Activated naive CD4-positive, alpha-beta T cell treated with anti-CD3 and anti-CD28 coated beads for 36 hours (primary cell): ENCODE measurements at regions of chr12 and their contacts with region 1.

Region 1: DNA sequence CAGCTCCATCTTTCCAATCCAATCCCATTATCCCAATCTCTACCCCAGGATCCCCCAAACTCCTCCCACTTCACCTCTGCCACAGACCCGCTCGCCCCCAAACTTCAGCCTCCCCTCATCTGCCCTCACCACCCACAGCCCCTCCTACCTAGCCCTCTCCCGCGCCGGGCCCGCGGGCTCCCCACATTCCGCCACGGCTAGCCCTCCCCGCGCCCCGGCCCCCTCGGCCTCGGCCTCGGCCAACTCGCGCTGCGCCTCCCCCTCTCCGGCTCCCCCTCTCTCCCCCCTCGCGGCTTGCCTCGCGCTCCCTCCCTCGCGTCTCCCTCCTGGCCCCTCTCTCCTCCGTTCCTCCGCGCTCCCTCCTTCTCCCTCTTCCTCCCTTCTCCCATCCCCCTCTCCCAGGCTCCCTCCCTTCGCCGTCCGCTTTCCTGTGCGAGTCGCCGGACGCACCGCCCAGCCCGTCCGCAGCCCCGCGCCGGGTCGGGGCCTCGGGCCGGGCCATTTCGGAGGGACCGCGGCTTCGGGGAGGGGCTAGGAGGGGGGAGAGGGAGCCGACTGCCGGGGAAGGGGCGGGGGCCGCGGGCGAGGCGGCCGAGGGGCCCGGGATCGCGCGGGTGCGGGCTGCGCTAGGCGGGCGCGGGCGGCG is at the start of gene ATN1:
- DNase-seq: peak; percentile 51
- H3K4me3 Mint-ChIP-seq: peak within 1 kb of the TSS; percentile 75
- H3K27ac Mint-ChIP-seq: peak within 1 kb of the TSS; percentile 81
- H3K4me1 Mint-ChIP-seq: peaks cover 59% of the 10 kb centered on the region
- H3K27me3 Mint-ChIP-seq: no peaks in the 10 kb centered on the region
- total RNA-seq, gene ATN1: 20.1 to 22.2 TPM

Region 2: GRCh38 chr12:6867413-6868210 is 59.9 kb before region 1 on chr12 and contains the start of gene TPI1:
- CTCF ChIA-PET with region 1: interaction called, 13 read pairs
- intact Hi-C with region 1: loop called (anchors 2 kb)
- DNase-seq: peak; percentile 79
- H3K4me3 Mint-ChIP-seq: peak within 1 kb of the TSS; percentile 98
- H3K27ac Mint-ChIP-seq: peak within 1 kb of the TSS; percentile 94
- H3K4me1 Mint-ChIP-seq: peaks cover 52% of the 10 kb centered on the region
- H3K27me3 Mint-ChIP-seq: no peaks in the 10 kb centered on the region
- total RNA-seq, gene TPI1: 1,222 to 1,282 TPM

Region 3: DNA sequence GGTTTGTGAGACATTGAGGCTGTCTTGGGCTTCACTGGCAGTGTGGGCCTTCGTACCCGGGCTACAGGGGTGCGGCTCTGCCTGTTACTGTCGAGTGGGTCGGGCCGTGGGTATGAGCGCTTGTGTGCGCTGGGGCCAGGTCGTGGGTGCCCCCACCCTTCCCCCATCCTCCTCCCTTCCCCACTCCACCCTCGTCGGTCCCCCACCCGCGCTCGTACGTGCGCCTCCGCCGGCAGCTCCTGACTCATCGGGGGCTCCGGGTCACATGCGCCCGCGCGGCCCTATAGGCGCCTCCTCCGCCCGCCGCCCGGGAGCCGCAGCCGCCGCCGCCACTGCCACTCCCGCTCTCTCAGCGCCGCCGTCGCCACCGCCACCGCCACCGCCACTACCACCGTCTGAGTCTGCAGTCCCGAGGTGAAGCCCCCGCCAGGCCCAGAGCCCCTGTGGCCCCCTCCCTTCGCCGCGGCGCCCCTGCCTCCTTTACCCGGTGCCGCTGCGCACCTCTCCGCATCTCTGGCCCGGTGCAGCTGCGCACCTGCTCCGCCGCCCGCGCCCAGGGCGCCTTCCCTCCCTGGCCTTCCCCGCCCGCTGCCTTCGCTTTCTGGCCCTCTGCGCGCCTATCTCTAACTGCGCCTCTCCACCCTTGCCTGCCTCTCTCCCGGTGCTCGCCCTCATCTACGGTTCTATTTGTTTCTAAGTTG is 13.1 kb before region 1 on chr12 and contains the start of gene ENO2:
- CTCF ChIA-PET with region 1: interaction called, 18 read pairs
- intact Hi-C with region 1: no loop called
- DNase-seq: peak; percentile 86
- H3K4me3 Mint-ChIP-seq: peak within 1 kb of the TSS; percentile 89
- H3K27ac Mint-ChIP-seq: peak within 1 kb of the TSS; percentile 71
- H3K4me1 Mint-ChIP-seq: peaks cover 35% of the 10 kb centered on the region
- H3K27me3 Mint-ChIP-seq: no peaks in the 10 kb centered on the region
- total RNA-seq, gene ENO2: 128 to 131 TPM

Region 4: DNA sequence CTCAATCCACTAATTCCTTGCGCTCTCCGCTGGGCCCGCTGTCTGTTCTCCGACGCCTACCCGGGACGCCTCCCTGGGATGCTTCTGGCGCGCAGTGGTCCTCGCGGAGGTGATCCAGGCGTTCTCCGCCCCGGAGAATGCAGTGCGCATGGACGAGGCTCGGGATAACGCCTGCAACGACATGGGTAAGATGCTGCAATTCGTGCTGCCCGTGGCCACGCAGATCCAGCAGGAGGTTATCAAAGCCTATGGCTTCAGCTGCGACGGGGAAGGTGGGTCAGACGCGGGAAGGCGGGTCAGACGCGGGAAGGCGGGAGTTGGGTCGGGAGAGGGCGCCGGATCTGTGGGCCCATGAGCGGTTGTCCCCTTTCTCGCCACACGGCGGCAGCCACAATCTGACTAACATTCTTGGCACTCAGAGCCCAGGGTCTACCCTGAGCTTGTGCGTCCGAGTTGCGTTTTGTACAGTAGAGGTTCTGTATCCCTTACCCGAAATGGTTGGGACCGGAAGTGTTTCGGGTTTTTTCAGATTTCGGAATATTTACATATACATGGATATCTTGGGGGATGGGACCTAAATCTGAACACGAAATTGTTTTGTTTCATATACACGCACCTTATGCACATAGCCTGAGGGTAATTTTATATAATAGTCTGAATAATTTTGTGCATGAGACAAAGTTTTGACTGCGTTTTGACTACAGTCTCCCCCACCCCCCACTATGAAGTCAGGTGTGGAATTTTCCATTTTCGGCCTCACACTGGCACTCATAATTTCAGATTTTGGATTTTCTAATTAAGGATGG is 17.1 kb after region 1 on chr12:
- CTCF ChIA-PET with region 1: interaction called, 43 read pairs
- intact Hi-C with region 1: loop called (anchors 1 kb)
- DNase-seq: peak; percentile 96
- H3K4me3 Mint-ChIP-seq: peak overlapping the region; percentile 94
- H3K27ac Mint-ChIP-seq: peak overlapping the region; percentile 93
- H3K4me1 Mint-ChIP-seq: peaks cover 49% of the 10 kb centered on the region
- H3K27me3 Mint-ChIP-seq: no peaks in the 10 kb centered on the region

Region 5: GRCh38 chr12:7042842-7043241 is 115.3 kb after region 1 on chr12:
- CTCF ChIA-PET with region 1: no interaction called
- intact Hi-C with region 1: loop called (anchors 1 kb)
- DNase-seq: no peak
- H3K4me3 Mint-ChIP-seq: no peak overlapping the region
- H3K27ac Mint-ChIP-seq: no peak overlapping the region
- H3K4me1 Mint-ChIP-seq: peaks cover 10% of the 10 kb centered on the region
- H3K27me3 Mint-ChIP-seq: no peaks in the 10 kb centered on the region

Region 6: GRCh38 chr12:7108796-7109571 is 181.5 kb after region 1 on chr12 and contains the start of gene C1RL:
- CTCF ChIA-PET with region 1: interaction called, 5 read pairs
- intact Hi-C with region 1: loop called (anchors 1 kb)
- DNase-seq: peak; percentile 91
- H3K4me3 Mint-ChIP-seq: peak within 1 kb of the TSS; percentile 95
- H3K27ac Mint-ChIP-seq: peak within 1 kb of the TSS; percentile 97
- H3K4me1 Mint-ChIP-seq: peaks cover 29% of the 10 kb centered on the region
- H3K27me3 Mint-ChIP-seq: no peaks in the 10 kb centered on the region
- total RNA-seq, gene C1RL: 10.3 to 11.5 TPM